HAP-1 (cell line): ENCODE measurements at regions of chr15 and their contacts with region 1.

Region 1: DNA sequence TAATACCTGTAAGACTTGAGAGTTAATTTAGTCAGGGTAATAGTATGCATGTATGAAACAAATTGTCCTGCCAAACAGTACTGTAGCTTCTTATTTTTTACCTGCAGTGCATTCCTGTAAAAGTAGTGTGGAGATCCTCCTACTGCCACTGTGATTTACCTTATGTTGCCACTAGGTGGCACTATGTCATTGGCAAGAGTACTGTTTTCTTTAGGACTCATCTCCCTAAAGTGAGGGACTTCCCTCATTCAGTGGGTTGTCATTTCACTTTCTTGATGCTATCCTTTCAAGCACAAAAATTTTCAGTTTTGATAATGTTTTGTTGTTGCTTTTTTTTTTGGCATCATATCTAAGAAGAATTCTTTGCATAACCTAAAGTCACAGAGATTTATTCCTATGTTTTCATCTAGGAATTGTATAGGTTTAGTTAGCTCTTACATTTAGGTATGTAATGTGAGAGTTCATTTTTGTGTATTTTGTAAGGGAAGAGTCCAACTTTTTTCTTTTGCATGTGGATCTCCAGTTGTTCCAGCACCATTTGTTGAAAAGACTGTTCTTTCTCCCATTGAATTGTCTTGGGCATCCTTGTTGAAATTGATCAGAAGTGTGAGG is 105.7 kb downstream of the AKAP13 start:
- DNase-seq: peak; percentile 93 to 99
- H3K4me3 ChIP-seq: no peak overlapping the region
- H3K4me1 ChIP-seq: peaks cover 28% of the 10 kb centered on the region
- H3K27me3 ChIP-seq: no peaks in the 10 kb centered on the region

Region 2: DNA sequence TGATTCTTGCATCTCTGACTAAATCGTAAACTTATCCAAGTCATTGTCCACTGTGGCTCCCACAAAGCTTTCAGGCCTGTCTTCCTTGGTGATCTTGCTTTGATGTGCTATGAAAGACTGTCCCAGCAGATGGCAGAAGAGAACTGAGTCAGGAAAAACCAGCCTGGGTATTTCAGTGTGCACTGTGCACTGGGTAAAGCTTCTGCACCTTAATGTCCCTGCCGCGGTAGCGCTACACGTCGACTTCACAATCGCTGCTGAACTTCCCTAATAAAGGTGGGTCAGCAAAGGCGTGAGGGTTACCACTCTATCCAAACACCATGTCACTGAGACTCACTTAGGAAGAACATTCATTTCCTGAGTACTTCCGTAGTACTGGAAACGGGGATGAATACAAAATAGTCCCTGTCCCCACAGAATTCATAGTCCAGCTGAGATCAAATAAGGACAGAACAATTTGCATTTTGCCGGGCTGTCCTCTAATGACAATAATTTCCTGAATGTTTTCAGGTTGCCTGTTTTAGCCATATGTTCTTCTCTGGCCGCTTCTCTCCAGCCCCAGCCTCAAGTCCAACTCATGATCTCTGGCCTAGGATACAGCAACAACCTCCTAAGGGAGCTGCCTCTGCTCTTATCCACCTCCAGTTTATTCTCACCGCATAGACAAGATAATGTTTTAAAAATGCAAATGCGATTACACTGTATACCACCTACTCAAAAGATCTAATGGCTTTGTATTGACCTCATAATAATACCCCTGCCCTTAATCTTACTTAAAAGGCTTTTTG is 189.3 kb before region 1 on chr15:
- in situ Hi-C with region 1: loop called (anchors 10 kb)
- DNase-seq: peak; percentile 90 to 96
- H3K4me3 ChIP-seq: no peak overlapping the region
- H3K4me1 ChIP-seq: peaks cover 4% of the 10 kb centered on the region; the same call in 1 of the 2 replicates
- H3K27me3 ChIP-seq: no peaks in the 10 kb centered on the region

Region 3: GRCh38 chr15:85831415-85832113 is 345.5 kb after region 1 on chr15:
- in situ Hi-C with region 1: loop called (anchors 10 kb)
- DNase-seq: peak; percentile 56 to 87
- H3K4me3 ChIP-seq: no peak overlapping the region
- H3K4me1 ChIP-seq: peaks cover 3% of the 10 kb centered on the region; the same call in 1 of the 2 replicates
- H3K27me3 ChIP-seq: no peaks in the 10 kb centered on the region; the same call in 1 of the 2 replicates